ENCODE measurements at regions of chrX and their contacts with region 1.

Region 1: GRCh38 chrX:48475774-48476577 is at the start of gene FTSJ1:
- DNase-seq: peak; percentile 69 to 81
- ATAC-seq: peak; percentile 95 to 97
- H3K4me3 ChIP-seq: peak within 1 kb of the TSS; percentile 58 to 78 (median 76)
- H3K27ac ChIP-seq: peak within 1 kb of the TSS; percentile 78 to 85 (median 84)
- H3K4me1 ChIP-seq: no peaks in the 10 kb centered on the region
- H3K27me3 ChIP-seq: no peaks in the 10 kb centered on the region
- CTCF ChIP-seq: no peak
- POLR2A ChIP-seq: peak; percentile 13 to 32
- total RNA-seq, gene FTSJ1: 31.4 to 47.7 (median 38.2) TPM

Region 2: GRCh38 chrX:48083212-48083611 is 392.8 kb before region 1 on chrX:
- in situ Hi-C with region 1: loop called in 1 of 4 experiments (anchors 25 kb)
- intact Hi-C with region 1: no loop called
- DNase-seq: peak in 1 of 2 donors; percentile 13
- ATAC-seq: no peak
- H3K4me3 ChIP-seq: no peak overlapping the region
- H3K27ac ChIP-seq: no peak overlapping the region
- H3K4me1 ChIP-seq: no peaks in the 10 kb centered on the region
- H3K27me3 ChIP-seq: no peaks in the 10 kb centered on the region
- CTCF ChIP-seq: peak in 3 of 5 experiments; percentile 31 to 42 (median 34)
- POLR2A ChIP-seq: no peak

Region 3: DNA sequence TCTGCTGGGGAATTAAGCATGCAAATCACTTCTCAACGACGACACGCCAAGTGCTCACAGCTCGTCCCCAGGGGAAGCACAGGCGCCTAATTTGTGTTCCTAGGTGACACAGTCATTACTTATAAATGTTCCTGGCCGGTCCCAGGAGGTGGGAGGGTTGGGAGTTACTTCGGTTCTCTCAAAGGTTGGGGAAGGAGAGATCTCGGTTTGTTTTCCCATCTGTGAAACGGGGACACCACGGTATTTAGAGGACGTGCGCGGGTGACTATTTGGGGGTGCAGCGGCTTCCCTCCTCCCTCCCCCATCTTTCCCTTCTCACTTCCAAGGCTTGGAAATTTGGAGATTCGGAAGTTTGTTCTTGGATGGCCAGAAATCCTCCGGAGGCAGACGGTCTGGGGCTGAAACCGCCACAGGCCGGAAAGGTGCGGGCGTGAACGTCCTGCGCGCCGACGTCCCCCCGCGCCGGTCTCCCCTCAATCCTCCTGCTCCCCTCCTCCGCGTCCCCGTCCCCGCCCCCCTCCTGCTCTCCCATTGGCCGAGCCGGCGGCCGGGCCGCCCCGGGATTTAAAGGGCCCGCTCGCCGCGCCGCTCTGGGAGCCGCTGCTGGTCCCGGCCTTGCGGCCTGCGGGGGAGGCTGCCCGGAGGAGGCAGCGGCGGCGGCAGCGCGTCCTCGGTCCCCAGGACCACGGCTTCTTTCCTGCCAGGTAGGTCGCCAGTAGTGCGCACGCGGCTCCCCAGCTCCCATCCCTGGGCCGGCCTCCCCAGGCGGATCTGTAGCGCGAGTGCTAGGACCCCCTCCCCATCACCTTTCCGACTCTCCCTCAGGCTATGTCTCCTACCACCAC is 32.6 kb after region 1 on chrX and contains the start of gene PORCN:
- in situ Hi-C with region 1: no loop called
- intact Hi-C with region 1: loop called (anchors 1 kb)
- DNase-seq: peak; percentile 70 to 76
- ATAC-seq: peak; percentile 91 to 94
- H3K4me3 ChIP-seq: peak within 1 kb of the TSS; percentile 68 to 78 (median 76)
- H3K27ac ChIP-seq: peak within 1 kb of the TSS; percentile 83 to 85 (median 84)
- H3K4me1 ChIP-seq: no peaks in the 10 kb centered on the region
- H3K27me3 ChIP-seq: no peaks in the 10 kb centered on the region
- CTCF ChIP-seq: no peak
- POLR2A ChIP-seq: peak; percentile 53 to 61
- total RNA-seq, gene PORCN: 11.4 to 18.7 (median 12.3) TPM

Region 4: GRCh38 chrX:48521353-48522243 is 45.6 kb after region 1 on chrX and contains the start of gene EBP:
- in situ Hi-C with region 1: no loop called
- intact Hi-C with region 1: loop called (anchors 5 kb)
- DNase-seq: peak; percentile 59 to 77
- ATAC-seq: peak; percentile 99 to 100
- H3K4me3 ChIP-seq: peak within 1 kb of the TSS; percentile 59 to 66 (median 62)
- H3K27ac ChIP-seq: peak within 1 kb of the TSS; percentile 58 to 77 (median 64)
- H3K4me1 ChIP-seq: peaks cover 0 to 4% of the 10 kb centered on the region in 2 donors
- H3K27me3 ChIP-seq: no peaks in the 10 kb centered on the region
- CTCF ChIP-seq: no peak
- POLR2A ChIP-seq: peak; percentile 22 to 43
- total RNA-seq, gene EBP: 2.7 to 5.3 (median 4.3) TPM

Region 5: GRCh38 chrX:48539345-48540027 is 63.5 kb after region 1 on chrX and contains the start of gene TBC1D25:
- in situ Hi-C with region 1: no loop called
- intact Hi-C with region 1: loop called (anchors 5 kb)
- DNase-seq: peak; percentile 95 to 98
- ATAC-seq: peak; percentile 94 to 97
- H3K4me3 ChIP-seq: peak within 1 kb of the TSS; percentile 70 to 82 (median 78)
- H3K27ac ChIP-seq: peak within 1 kb of the TSS; percentile 91 to 96 (median 92)
- H3K4me1 ChIP-seq: peaks cover 0 to 3% of the 10 kb centered on the region in 2 donors
- H3K27me3 ChIP-seq: no peaks in the 10 kb centered on the region
- CTCF ChIP-seq: peak; percentile 8 to 41 (median 30)
- POLR2A ChIP-seq: peak; percentile 66 to 75
- total RNA-seq, gene TBC1D25: 10.3 to 14.8 (median 11.9) TPM

Region 6: DNA sequence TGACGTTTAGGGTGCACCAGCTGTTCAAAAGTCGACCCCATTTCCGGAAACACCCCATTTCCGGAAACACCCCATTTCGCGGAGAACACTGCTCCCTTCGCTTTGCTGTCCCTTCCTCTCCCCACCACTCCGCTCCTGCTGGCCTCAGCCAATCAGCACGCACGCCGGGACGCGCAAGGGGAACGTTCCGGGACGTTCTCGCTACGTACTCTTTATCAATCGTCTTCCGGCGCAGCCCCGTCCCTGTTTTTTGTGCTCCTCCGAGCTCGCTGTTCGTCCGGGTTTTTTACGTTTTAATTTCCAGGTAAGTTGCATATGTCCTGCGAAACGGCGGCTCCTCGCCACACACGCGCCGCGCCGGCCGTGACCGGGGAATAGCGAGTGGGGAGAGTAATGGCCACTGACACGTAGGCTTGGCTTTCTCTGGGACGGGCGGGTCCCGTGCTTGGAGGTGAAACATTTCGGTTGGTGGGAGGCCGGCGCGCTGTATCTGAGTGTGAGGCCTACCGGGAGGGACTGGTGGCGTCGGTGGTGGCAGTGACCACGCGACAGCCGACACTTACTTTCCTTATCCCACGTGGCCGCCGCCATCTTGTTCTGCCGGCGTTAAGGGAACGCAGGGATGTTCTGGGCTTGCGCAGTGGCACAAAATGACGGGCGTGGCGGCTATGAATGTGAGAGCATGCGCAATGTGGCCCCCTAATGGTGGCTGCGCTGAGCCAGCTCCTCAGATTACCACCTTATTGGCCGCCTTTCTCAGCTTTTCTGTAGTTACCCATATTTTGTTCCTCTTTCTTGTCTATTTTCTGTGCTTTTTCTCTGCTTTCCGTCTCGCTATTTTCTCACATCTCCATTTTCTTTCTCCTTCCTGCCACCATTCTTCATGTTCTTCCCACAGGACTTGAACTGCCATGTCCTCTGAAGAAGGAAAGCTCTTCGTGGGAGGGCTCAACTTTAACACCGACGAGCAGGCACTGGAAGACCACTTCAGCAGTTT is 98.6 kb after region 1 on chrX and contains the start of gene RBM3:
- in situ Hi-C with region 1: no loop called
- intact Hi-C with region 1: loop called (anchors 10 kb)
- DNase-seq: peak; percentile 90 to 91
- ATAC-seq: peak; percentile 97 to 98
- H3K4me3 ChIP-seq: peak within 1 kb of the TSS; percentile 64 to 89 (median 81)
- H3K27ac ChIP-seq: peak within 1 kb of the TSS; percentile 94 to 99 (median 98)
- H3K4me1 ChIP-seq: peaks cover 11 to 14% of the 10 kb centered on the region in 2 donors
- H3K27me3 ChIP-seq: no peaks in the 10 kb centered on the region
- CTCF ChIP-seq: peak in 4 of 5 experiments; percentile 31 to 42 (median 34)
- POLR2A ChIP-seq: peak; percentile 84 to 88
- total RNA-seq, gene RBM3: 49.2 to 92.1 (median 59.9) TPM

Region 7: GRCh38 chrX:48597353-48598264 is 121.6 kb after region 1 on chrX and contains the start of gene WDR13:
- in situ Hi-C with region 1: no loop called
- intact Hi-C with region 1: loop called (anchors 1 kb)
- DNase-seq: peak; percentile 82 to 90
- ATAC-seq: peak; percentile 92 to 97
- H3K4me3 ChIP-seq: peak within 1 kb of the TSS; percentile 75 to 85 (median 84)
- H3K27ac ChIP-seq: peak within 1 kb of the TSS; percentile 89 to 99 (median 96)
- H3K4me1 ChIP-seq: peaks cover 3 to 4% of the 10 kb centered on the region in 2 donors
- H3K27me3 ChIP-seq: no peaks in the 10 kb centered on the region
- CTCF ChIP-seq: no peak
- POLR2A ChIP-seq: peak; percentile 56 to 61
- total RNA-seq, gene WDR13: 82.7 to 143 (median 133) TPM